Calu3 (cell line): ENCODE measurements at regions of chr10 and their contacts with region 1.

Region 1: DNA sequence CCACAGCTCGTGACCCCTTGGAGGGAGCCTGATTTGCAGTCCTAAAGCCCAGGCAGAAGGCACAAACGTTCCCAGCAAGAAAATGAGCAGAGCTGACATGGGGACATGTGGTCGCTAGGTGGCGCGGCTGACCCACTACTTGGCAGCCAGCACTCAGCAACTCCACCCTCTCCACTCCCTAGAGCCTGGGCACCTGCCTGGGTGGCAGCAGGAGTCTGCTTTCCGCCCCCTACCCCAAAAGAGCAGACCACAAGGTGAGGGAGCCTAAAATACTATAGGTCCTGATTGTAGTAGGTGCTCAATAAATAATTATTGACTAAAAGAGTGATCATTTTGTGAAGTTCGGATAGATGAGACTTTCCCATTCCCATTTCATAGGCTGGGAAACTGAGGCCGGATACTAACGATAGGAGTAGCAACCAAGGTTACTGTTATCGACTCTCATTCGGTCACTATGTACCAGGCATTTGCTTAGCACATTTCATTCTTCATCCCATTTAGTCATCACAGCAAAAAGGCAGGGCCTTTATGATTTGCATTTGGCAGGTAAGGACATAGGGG is 57.4 kb downstream of the NEUROG3 start:
- DNase-seq: peak; percentile 86
- H3K4me3 Mint-ChIP-seq: no peak overlapping the region
- H3K27ac Mint-ChIP-seq: peak overlapping the region; percentile 31
- H3K4me1 Mint-ChIP-seq: peaks cover 10% of the 10 kb centered on the region
- H3K27me3 Mint-ChIP-seq: no peaks in the 10 kb centered on the region
- CTCF ChIP-seq: peak; percentile 89

Region 2: GRCh38 chr10:69479240-69480067 is 36.3 kb before region 1 on chr10:
- CTCF ChIA-PET with region 1: no interaction called
- intact Hi-C with region 1: no loop called
- DNase-seq: no peak
- H3K4me3 Mint-ChIP-seq: no peak overlapping the region
- H3K27ac Mint-ChIP-seq: no peak overlapping the region
- H3K4me1 Mint-ChIP-seq: peaks cover 20% of the 10 kb centered on the region
- H3K27me3 Mint-ChIP-seq: no peaks in the 10 kb centered on the region
- CTCF ChIP-seq: no peak

Region 3: DNA sequence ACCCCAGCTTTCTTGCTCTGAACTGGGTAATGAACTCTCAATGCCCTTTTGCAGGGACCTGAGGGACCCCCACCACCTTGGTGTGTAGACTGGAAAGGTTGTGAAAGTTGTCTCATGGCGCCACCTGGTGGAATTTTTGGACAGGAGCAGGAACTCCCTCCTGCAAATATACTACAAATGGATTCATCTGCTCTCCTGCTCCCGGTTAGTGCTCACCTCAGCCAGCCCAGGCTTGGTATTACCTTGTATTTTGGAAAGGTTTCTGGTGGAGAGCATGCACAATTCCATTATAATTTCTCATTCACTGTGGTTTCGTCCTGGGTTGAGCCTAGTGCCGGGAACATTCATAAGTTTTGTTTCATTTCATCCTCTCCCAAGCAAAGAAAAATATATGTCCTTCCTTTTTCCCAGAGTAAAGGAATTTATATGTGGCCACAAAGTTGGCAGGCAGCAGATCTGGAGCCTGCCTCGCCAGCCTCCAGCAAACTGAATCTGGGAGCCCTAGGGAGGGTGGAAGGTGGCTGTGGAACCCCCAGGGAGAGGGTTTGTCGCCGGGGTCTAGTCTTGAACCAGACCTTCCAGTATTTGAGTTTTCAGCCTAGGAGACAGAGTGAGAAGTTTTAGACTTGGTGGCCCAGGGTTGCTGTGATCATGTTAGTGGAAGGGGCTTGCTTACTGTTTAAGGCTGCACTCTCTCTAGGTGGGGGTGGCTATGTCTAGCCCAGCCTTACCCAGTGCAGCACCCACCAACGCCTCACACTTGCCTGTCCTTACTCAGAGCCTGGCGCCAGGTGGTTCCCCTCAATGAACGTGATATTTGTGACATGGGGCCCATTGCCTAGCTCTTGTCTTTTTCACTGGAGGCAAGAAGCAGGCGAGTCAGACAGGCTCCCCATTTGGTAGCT is 123.8 kb after region 1 on chr10:
- CTCF ChIA-PET with region 1: interaction called, 65 read pairs
- intact Hi-C with region 1: loop called (anchors 1 kb)
- DNase-seq: peak; percentile 74
- H3K4me3 Mint-ChIP-seq: no peak overlapping the region
- H3K27ac Mint-ChIP-seq: no peak overlapping the region
- H3K4me1 Mint-ChIP-seq: no peaks in the 10 kb centered on the region
- H3K27me3 Mint-ChIP-seq: peaks cover 18% of the 10 kb centered on the region
- CTCF ChIP-seq: peak; percentile 97